ENCODE measurements at regions of chr9 and their contacts with region 1.

Region 1: GRCh38 chr9:37100327-37100726 is 20.0 kb upstream of the ZCCHC7 start:
- DNase-seq: no peak
- ATAC-seq: no peak
- H3K4me3 Mint-ChIP-seq: peak overlapping the region; percentile 24
- H3K27ac Mint-ChIP-seq: peak overlapping the region; percentile 77
- H3K4me1 Mint-ChIP-seq: peaks cover 44% of the 10 kb centered on the region
- H3K27me3 Mint-ChIP-seq: no peaks in the 10 kb centered on the region
- CTCF ChIP-seq: no peak

Region 2: GRCh38 chr9:36862206-36863145 is 237.9 kb before region 1 on chr9:
- CTCF ChIA-PET with region 1: no interaction called
- POLR2A ChIA-PET with region 1: no interaction called
- intact Hi-C with region 1: no loop called
- DNase-seq: no peak
- ATAC-seq: no peak
- H3K4me3 Mint-ChIP-seq: no peak overlapping the region
- H3K27ac Mint-ChIP-seq: peak overlapping the region; percentile 59
- H3K4me1 Mint-ChIP-seq: peaks cover 67% of the 10 kb centered on the region
- H3K27me3 Mint-ChIP-seq: no peaks in the 10 kb centered on the region
- CTCF ChIP-seq: no peak

Region 3: DNA sequence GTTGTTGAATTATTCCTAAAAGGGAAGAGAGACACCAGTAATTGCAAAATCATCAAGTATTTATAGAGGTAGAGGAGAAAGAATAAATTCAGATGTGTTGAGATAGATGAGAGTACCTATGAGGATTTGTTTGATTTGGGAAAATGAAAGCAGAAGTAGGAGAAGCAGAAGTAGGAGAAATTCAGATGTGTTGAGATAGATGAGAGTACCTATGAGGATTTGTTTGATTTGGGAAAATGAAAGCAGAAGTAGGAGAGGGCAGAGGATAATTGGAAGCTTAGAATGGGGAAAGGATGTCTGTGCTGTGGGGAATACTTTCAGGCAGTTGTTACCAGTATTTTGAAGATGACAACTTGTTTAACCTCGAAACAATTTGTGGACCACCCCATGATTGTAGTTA is 15.1 kb before region 1 on chr9:
- CTCF ChIA-PET with region 1: no interaction called
- POLR2A ChIA-PET with region 1: interaction called, 4 read pairs
- intact Hi-C with region 1: loop called (anchors 2 kb)
- DNase-seq: no peak
- ATAC-seq: peak; percentile 29
- H3K4me3 Mint-ChIP-seq: peak overlapping the region; percentile 21
- H3K27ac Mint-ChIP-seq: peak overlapping the region; percentile 41
- H3K4me1 Mint-ChIP-seq: peaks cover 81% of the 10 kb centered on the region
- H3K27me3 Mint-ChIP-seq: no peaks in the 10 kb centered on the region
- CTCF ChIP-seq: no peak

Region 4: DNA sequence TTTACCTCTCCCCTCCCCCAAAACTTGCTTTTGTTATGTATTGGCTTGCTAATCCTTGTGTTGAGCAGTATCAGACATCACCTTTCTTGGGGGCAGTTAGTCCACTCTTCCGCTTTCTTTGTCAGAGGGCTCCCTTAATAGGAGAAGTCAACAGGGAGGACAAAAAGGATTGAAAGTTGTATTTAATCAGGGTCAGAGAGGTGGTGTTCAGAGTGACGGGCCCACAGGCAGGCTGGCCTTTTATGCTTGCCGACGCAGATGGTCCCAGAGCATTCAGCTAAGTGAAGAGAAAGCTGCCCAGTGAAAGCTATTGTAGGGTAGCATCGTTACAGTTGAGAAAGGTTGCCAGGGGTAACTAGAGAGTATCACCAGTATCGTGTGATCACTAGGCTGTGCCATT is 151.1 kb after region 1 on chr9:
- CTCF ChIA-PET with region 1: no interaction called
- POLR2A ChIA-PET with region 1: no interaction called
- intact Hi-C with region 1: no loop called
- DNase-seq: peak; percentile 31
- ATAC-seq: peak; percentile 93
- H3K4me3 Mint-ChIP-seq: peak overlapping the region; percentile 45
- H3K27ac Mint-ChIP-seq: peak overlapping the region; percentile 94
- H3K4me1 Mint-ChIP-seq: peaks cover 68% of the 10 kb centered on the region
- H3K27me3 Mint-ChIP-seq: no peaks in the 10 kb centered on the region
- CTCF ChIP-seq: no peak